HCT116 (cell line): ENCODE measurements at regions of chr16 and their contacts with region 1.

Region 1: GRCh38 chr16:12340151-12340733 is 363.7 kb downstream of the SNX29 start:
- DNase-seq: peak; percentile 55
- ATAC-seq: peak; percentile 73
- H3K4me3 ChIP-seq: no peak overlapping the region
- H3K27ac ChIP-seq: no peak overlapping the region
- H3K4me1 ChIP-seq: peaks cover 14 to 27% of the 10 kb centered on the region in 2 experiments
- H3K27me3 ChIP-seq: no peaks in the 10 kb centered on the region
- CTCF ChIP-seq: peak; percentile 57 to 77 (median 76); a peak in 5 of 6 replicates
- POLR2A ChIP-seq: no peak
- RAD21 ChIP-seq: peak; percentile 76

Region 2: GRCh38 chr16:12392585-12393091 is 52.4 kb after region 1 on chr16:
- CTCF ChIA-PET with region 1: no interaction called
- POLR2A ChIA-PET with region 1: no interaction called
- RAD21 ChIA-PET with region 1: no interaction called
- intact Hi-C with region 1: loop called (anchors 5 kb)
- DNase-seq: no peak
- ATAC-seq: no peak
- H3K4me3 ChIP-seq: no peak overlapping the region
- H3K27ac ChIP-seq: no peak overlapping the region
- H3K4me1 ChIP-seq: peaks cover 0 to 2% of the 10 kb centered on the region in 2 experiments; a peak in 3 of 4 replicates
- H3K27me3 ChIP-seq: no peaks in the 10 kb centered on the region
- CTCF ChIP-seq: peak in 2 of 3 experiments; percentile 17 to 39; a peak in 3 of 6 replicates
- POLR2A ChIP-seq: no peak
- RAD21 ChIP-seq: no peak

Region 3: GRCh38 chr16:12500771-12501170 is 160.5 kb after region 1 on chr16:
- CTCF ChIA-PET with region 1: no interaction called
- POLR2A ChIA-PET with region 1: no interaction called
- RAD21 ChIA-PET with region 1: no interaction called
- intact Hi-C with region 1: no loop called
- DNase-seq: no peak
- ATAC-seq: no peak; the same call in 1 of the 2 replicates
- H3K4me3 ChIP-seq: no peak overlapping the region
- H3K27ac ChIP-seq: no peak overlapping the region
- H3K4me1 ChIP-seq: 0 out of 4 replicates have a peak, but pooled peaks cover 0 to 3% of the 10 kb centered on the region in 2 experiments
- H3K27me3 ChIP-seq: no peaks in the 10 kb centered on the region
- CTCF ChIP-seq: no peak
- POLR2A ChIP-seq: no peak
- RAD21 ChIP-seq: no peak

Region 4: DNA sequence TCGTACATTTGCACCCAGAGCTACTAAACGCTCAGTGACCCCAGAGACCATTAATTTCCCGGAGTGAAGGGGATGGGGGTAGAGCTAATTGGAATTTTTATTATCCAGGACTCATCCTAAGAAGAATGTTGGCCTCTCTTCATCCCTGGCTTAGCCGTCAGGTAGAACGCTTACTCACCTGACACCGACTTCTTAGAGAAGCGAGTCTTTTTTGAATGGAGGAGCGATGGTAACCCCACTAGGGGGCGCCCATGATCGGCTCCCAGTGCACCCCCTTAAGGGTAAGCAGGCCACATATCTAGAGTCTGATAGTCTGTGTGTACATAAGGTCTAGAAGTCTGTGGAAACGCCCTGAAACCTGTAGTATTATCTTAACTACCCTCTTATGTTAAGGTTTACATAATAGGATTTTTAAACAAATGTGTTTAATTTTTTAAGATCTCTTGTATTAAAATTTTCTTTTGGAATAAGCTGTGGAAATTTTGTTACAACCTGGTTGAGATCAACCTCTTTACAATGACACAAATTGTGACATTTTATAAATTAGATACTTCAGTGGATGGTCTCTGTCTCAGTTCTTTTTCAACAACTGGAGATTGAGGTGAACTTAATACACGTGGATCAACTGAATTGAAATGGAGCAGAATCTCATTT is 233.6 kb after region 1 on chr16:
- CTCF ChIA-PET with region 1: no interaction called
- POLR2A ChIA-PET with region 1: no interaction called
- RAD21 ChIA-PET with region 1: no interaction called
- intact Hi-C with region 1: loop called (anchors 5 kb)
- DNase-seq: peak; percentile 52
- ATAC-seq: peak; percentile 94
- H3K4me3 ChIP-seq: no peak overlapping the region
- H3K27ac ChIP-seq: no peak overlapping the region
- H3K4me1 ChIP-seq: 0 out of 4 replicates have a peak, but pooled peaks cover 0 to 3% of the 10 kb centered on the region in 2 experiments
- H3K27me3 ChIP-seq: no peaks in the 10 kb centered on the region
- CTCF ChIP-seq: peak; percentile 81 to 93 (median 88)
- POLR2A ChIP-seq: no peak
- RAD21 ChIP-seq: peak; percentile 94

Region 5: DNA sequence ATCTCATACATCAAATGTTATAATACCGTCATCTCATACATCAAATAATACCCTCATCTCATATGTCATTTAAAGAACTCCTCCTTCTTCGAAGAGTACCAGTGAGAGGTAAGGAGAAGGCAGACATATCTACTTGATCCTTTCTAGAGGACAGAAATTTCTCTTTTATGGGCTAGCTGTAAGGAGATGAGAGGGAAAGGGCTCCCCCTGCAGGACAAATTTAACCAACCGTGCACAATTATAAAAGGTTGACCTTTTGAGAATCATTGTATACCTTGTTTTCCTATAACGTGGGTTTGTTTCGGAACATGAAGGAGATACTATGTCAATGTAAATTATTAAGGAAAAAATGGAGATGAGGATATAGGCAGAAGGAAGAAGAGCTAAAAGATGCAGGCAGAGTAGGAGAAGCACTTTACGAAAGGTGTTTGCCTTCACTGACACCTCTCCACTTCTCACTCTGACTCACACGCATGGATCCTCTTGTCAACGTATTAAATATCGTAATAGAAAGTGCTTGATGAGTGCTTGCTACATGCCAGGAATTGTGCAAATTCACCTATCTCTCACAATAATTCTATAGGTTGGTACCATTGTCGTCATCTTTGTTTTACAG is 1113.8 kb after region 1 on chr16:
- CTCF ChIA-PET with region 1: no interaction called
- POLR2A ChIA-PET with region 1: no interaction called
- RAD21 ChIA-PET with region 1: no interaction called
- intact Hi-C with region 1: loop called (anchors 10 kb)
- DNase-seq: peak; percentile 4
- ATAC-seq: no peak
- H3K4me3 ChIP-seq: no peak overlapping the region
- H3K27ac ChIP-seq: no peak overlapping the region
- H3K4me1 ChIP-seq: no peaks in the 10 kb centered on the region
- H3K27me3 ChIP-seq: no peaks in the 10 kb centered on the region; the same call in 1 of the 2 replicates
- CTCF ChIP-seq: peak; percentile 18 to 72 (median 47); a peak in 4 of 6 replicates
- POLR2A ChIP-seq: no peak
- RAD21 ChIP-seq: peak; percentile 34

Region 6: GRCh38 chr16:13829697-13830299 is 1489.6 kb after region 1 on chr16:
- CTCF ChIA-PET with region 1: no interaction called
- POLR2A ChIA-PET with region 1: no interaction called
- RAD21 ChIA-PET with region 1: no interaction called
- intact Hi-C with region 1: no loop called
- DNase-seq: no peak
- ATAC-seq: no peak
- H3K4me3 ChIP-seq: no peak overlapping the region
- H3K27ac ChIP-seq: no peak overlapping the region
- H3K4me1 ChIP-seq: no peaks in the 10 kb centered on the region
- H3K27me3 ChIP-seq: peaks cover 24% of the 10 kb centered on the region
- CTCF ChIP-seq: no peak
- POLR2A ChIP-seq: no peak
- RAD21 ChIP-seq: no peak